Posterior cingulate gyrus (tissue), 11 donors: ENCODE measurements at regions of chr20 and their contacts with region 1.

Region 1: DNA sequence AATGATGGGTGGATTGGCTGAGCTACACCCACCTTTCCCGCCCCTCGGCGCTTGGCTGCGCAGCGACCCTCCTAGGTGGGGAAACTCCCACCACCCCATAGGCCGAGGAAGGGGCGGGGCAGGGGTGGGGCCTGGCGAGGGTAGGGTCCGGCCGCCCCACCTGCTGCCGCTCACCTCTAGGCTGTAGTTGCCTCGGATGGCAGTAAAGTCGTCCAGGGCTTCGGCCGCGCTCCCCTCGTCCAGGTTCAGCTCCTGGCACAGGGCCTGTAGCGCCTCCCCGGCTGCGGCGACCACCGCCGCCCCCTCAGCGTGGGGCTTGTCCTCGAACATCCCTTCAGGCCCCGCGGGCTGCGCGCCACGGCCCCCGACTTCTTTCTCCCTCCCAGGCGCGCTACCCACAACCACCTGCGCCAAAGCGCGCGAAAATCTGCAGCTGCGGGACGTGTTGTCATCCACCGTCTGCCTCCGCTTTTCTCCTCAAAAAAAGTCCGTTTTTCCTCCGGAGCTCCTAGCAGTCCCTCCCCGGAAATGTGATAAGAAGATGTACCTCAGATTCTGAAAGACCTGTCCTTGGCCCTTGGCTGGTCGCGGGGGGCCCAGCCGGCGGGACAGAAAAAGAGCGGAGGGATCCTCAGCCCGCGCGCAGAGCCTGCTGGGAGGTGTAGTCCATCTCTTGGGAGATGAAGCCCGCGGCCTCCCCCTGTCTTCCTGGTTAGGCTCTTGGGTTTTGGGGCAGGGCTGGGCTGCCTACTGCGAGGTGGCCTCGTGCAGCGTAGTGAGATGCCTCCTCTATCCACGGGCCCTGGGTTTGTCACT is at the start of gene RBL1:
- DNase-seq: peak; percentile 75 to 97 (median 84)

Region 2: DNA sequence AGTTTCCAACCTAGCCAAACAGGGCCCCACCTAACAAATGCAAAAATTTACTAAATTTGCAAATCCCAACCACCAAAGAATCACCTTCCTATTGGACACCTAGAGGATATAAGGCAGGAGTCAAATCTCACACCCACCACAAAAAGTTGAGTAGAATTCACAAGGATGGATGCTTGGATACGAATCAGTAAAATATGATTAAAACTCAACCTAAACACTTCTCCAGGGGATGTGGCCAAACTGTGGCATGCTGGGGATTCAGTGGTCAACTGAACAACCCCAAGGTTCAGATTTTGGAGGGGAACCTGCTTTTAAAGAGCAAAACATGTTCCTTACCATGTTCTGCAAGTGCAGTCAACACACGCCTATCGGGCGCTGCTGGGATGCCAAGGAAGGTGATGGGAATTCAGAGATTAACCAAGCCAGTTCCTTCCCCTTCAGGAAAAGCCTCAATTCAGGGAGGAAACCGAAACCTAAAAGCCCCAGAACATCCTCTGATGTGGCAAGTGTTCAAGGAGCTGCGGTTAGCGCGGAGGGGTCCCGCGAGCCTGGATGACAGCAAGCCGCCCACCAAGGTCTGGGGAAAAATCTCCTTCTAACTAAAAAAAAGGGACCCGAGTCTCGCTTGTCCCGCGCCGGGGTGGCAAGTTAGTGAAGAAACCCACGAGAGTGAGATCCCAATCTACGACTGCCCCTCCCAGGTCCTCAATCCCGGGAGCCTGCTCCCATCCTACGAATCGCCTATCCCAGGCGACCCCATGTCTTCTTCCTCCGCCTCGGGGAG is 145.2 kb before region 1 on chr20:
- intact Hi-C with region 1: loop called (anchors 1 kb)
- DNase-seq: peak in 6 of 10 donors; percentile 6 to 86 (median 21)